ENCODE measurements at regions of chr20 and their contacts with region 1.

Region 1: DNA sequence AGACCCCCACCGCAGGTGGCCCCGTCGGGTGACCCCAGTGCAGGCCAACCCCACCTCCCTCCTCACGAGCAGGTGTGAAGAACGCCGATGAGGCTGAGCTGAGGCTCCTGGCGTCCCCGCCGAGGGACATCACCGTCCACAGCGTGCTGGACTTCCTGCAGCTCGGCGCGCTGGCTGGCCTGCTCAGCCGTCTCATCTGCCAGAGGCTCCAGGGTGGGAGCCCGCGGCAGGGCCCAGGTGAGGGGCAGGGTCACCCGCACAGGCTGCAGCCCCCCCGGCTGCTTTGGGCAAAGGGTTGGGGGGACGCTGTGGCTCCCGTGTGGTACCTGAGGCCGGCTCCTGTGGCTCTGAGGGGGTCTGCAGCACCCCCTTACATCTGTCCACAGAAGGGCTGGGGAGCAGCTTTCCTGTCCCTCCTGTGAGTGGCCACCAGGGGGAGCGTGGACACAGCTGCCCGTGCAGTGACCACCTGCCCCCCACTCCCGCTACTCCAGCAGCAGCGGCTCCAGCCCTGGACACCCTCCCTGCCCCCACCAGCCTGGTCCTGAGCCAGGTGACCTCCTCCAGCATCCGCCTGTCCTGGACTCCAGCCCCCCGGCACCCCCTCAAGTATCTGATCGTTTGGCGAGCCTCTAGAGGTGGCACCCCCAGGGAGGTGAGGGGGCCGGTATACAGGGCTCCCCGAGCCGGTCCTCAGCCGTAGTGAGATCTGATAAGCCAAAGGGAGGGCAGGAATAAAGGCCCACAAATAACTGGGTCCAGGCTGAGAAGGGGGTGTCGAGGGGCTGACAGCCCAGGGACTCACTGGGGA is 16.5 kb downstream of the COL20A1 start:
- DNase-seq: peak; percentile 61
- ATAC-seq: peak; percentile 37 to 55

Region 2: GRCh38 chr20:63381807-63382322 is 72.4 kb after region 1 on chr20:
- intact Hi-C with region 1: loop called (anchors 1 to 2 kb)
- DNase-seq: no peak
- ATAC-seq: peak; percentile 41 to 54

Measured in left cardiac atrium (tissue), 4 donors.